ENCODE measurements at regions of chr17 and their contacts with region 1.

Region 1: DNA sequence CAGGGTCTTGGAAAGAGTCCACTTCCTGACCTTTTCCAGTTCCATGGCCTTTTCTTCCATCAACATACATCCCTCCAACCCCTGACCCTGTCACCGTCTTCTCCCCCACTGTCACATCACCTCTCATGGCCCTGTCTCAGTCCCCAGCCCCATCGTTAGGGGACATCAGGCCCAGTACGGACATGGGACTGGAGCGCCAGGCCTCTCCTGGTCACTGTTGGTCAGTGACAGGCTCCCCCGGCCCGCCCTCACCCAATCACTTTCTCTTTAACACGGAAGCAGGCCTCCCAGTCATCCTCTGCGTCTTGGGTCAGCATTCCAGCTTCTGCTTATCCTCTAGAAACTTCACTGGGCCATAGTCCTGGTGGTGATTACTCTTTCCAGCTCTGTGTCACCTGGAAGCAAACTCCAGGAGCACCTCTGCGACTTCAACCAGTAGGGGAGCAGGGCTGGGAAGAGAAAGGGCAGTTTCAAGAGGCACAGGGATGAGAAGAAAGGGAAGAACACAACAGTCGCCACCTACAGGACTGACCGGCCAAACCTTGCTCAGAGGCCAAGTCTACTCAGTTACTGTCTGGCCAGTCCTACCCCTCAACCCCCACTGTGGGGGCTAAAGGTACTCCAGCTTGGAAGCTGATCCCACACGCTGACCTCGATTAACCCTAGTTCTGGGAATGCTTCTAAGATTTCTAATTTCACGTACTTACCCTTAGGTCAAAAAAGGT is 15.9 kb upstream of the ICAM2 start:
- DNase-seq: no peak
- ATAC-seq: peak; percentile 25
- H3K4me3 ChIP-seq: no peak overlapping the region
- H3K27ac ChIP-seq: no peak overlapping the region
- H3K4me1 ChIP-seq: no peaks in the 10 kb centered on the region
- H3K27me3 ChIP-seq: no peaks in the 10 kb centered on the region
- CTCF ChIP-seq: no peak

Region 2: GRCh38 chr17:64145757-64146417 is 109.5 kb after region 1 on chr17:
- intact Hi-C with region 1: no loop called
- DNase-seq: peak; percentile 96
- ATAC-seq: peak; percentile 97
- H3K4me3 ChIP-seq: peak overlapping the region; percentile 93
- H3K27ac ChIP-seq: peak overlapping the region; percentile 98
- H3K4me1 ChIP-seq: peaks cover 27% of the 10 kb centered on the region
- H3K27me3 ChIP-seq: no peaks in the 10 kb centered on the region
- CTCF ChIP-seq: peak; percentile 11

Region 3: GRCh38 chr17:64281962-64282727 is 245.8 kb after region 1 on chr17:
- intact Hi-C with region 1: loop called (anchors 10 kb)
- DNase-seq: no peak
- ATAC-seq: peak; percentile 84
- H3K4me3 ChIP-seq: no peak overlapping the region
- H3K27ac ChIP-seq: no peak overlapping the region
- H3K4me1 ChIP-seq: peaks cover 15% of the 10 kb centered on the region
- H3K27me3 ChIP-seq: no peaks in the 10 kb centered on the region
- CTCF ChIP-seq: peak; percentile 77